HepG2 (cell line): ENCODE measurements at regions of chr10 and their contacts with region 1.

Region 1: DNA sequence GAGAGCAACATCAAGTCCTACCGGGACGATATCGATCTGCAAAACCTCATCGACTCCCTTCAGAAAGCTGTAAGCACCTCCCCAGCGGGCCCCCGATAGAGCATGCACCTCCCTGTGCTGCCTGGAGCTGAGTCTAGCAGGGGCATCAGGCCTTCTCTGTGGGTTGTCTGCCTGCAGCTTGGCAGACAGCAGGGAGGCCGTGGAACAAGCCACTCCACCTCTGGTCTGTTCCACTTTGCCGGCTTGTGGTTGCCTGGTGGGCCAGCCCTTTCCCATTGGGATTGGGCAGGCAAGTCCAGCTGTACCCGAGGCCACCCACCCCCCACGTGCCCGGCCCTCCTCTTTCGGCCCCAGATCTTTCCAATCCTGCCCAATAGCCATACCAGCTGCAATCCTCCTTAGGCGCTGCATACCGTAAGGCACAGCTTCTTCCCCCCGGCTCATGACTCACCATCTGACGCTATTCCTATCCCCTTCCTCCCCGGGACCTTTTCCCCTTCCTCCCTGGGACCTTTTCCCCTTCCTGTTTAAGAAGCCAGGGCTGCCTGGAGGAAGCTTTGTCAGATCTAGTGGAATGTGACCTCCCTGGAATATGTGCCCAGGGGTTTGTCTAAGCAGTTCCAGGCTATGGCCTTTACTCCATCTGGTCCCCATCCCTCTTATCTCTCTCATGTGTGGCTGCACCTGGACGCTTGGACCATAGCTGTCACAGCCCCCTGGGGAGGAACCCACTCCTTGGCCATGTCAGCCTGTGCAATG is 28.1 kb upstream of the SH2D4B start:
- DNase-seq: no peak
- ATAC-seq: no peak
- H3K4me3 ChIP-seq: no peak overlapping the region
- H3K27ac ChIP-seq: no peak overlapping the region
- H3K4me1 ChIP-seq: peaks cover 31% of the 10 kb centered on the region
- H3K27me3 ChIP-seq: no peaks in the 10 kb centered on the region
- CTCF ChIP-seq: no peak
- EP300 ChIP-seq: no peak
- POLR2A ChIP-seq: no peak
- RAD21 ChIP-seq: no peak

Region 2: DNA sequence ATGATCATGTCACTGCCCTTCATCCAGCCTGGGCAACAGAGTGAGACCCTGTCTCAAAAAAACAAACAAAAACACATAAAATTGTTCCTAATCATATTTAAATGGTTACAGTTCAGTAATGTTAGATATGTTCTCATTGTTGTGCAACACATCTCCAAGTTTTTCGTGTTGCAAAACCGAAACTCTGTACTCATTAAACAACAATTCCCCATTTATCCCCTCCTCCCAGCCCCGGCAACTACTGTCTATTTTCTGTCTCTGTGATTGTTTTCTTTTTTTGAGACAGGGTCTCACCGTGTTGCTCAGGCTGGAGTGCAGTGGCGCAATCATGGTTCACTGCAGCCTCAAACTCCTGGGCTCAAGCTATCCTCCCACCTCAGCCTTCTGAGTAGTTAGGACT is 117.3 kb before region 1 on chr10:
- CTCF ChIA-PET with region 1: no interaction called
- POLR2A ChIA-PET with region 1: no interaction called
- in situ Hi-C with region 1: loop called (anchors 5 kb)
- intact Hi-C with region 1: no loop called
- DNase-seq: no peak
- ATAC-seq: peak; percentile 13; the same call in 2 of the 3 replicates
- H3K4me3 ChIP-seq: peak overlapping the region in 1 of 3 experiments; percentile 30; a peak in 3 of 6 replicates
- H3K27ac ChIP-seq: no peak overlapping the region
- H3K4me1 ChIP-seq: peaks cover 33% of the 10 kb centered on the region
- H3K27me3 ChIP-seq: peaks cover 2 to 5% of the 10 kb centered on the region in 2 experiments; a peak in 2 of 5 replicates
- CTCF ChIP-seq: no peak
- EP300 ChIP-seq: no peak
- POLR2A ChIP-seq: no peak
- RAD21 ChIP-seq: no peak

Region 3: GRCh38 chr10:80647173-80647811 is 137.7 kb after region 1 on chr10:
- CTCF ChIA-PET with region 1: no interaction called
- POLR2A ChIA-PET with region 1: no interaction called
- in situ Hi-C with region 1: no loop called
- intact Hi-C with region 1: no loop called
- DNase-seq: no peak
- ATAC-seq: no peak
- H3K4me3 ChIP-seq: no peak overlapping the region
- H3K27ac ChIP-seq: no peak overlapping the region
- H3K4me1 ChIP-seq: peaks cover 10% of the 10 kb centered on the region
- H3K27me3 ChIP-seq: no peaks in the 10 kb centered on the region; a peak in 1 of 5 replicates
- CTCF ChIP-seq: no peak
- EP300 ChIP-seq: no peak
- POLR2A ChIP-seq: no peak
- RAD21 ChIP-seq: no peak